Motor neuron (in vitro differentiated cells): ENCODE measurements at regions of chr17 and their contacts with region 1.

Region 1: GRCh38 chr17:38674749-38675615 is at the start of gene EPOP:
- ATAC-seq: peak; percentile 84 to 90 (median 86)
- H3K4me3 ChIP-seq: peak within 1 kb of the TSS; percentile 32 to 48 (median 42)
- H3K27ac ChIP-seq: no peak within 1 kb of the TSS
- H3K4me1 ChIP-seq: peaks cover 3 to 9% of the 10 kb centered on the region in 2 donors
- total RNA-seq, gene EPOP: 0.60 to 8.8 (median 1.4) TPM

Region 2: GRCh38 chr17:38509008-38509771 is 165.8 kb before region 1 on chr17:
- in situ Hi-C with region 1: loop called in 2 of 9 experiments (anchors 25 kb)
- ATAC-seq: peak; percentile 51 to 80 (median 60)
- H3K4me3 ChIP-seq: peak overlapping the region in 3 of 5 donors; percentile 1 to 30 (median 22)
- H3K27ac ChIP-seq: peak overlapping the region; percentile 5 to 58
- H3K4me1 ChIP-seq: peaks cover 8 to 16% of the 10 kb centered on the region in 2 donors

Region 3: DNA sequence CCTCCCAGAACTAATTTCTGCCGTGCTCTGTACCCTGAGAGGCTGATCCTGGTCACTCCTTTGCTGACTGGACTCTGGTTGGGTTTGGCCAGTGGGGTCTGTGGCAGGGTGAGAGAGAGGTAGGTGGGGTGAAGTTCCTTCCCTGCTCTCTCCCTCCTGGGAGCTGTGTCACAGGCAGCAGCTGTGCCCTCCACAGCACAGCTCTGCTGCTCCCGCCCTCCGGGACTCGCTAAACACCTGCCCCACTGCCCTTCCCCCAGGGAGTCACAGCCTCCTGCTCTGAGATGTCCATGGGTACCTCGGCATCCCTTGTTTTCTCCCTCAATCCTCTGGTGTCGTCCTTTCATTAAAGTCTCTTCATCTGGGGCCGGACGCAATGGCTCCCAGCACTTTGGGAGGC is 135.6 kb before region 1 on chr17:
- in situ Hi-C with region 1: loop called in 1 of 9 experiments (anchors 25 kb)
- ATAC-seq: peak in 5 of 8 experiments; percentile 39 to 54 (median 44)
- H3K4me3 ChIP-seq: no peak overlapping the region
- H3K27ac ChIP-seq: no peak overlapping the region
- H3K4me1 ChIP-seq: no peaks in the 10 kb centered on the region

Region 4: DNA sequence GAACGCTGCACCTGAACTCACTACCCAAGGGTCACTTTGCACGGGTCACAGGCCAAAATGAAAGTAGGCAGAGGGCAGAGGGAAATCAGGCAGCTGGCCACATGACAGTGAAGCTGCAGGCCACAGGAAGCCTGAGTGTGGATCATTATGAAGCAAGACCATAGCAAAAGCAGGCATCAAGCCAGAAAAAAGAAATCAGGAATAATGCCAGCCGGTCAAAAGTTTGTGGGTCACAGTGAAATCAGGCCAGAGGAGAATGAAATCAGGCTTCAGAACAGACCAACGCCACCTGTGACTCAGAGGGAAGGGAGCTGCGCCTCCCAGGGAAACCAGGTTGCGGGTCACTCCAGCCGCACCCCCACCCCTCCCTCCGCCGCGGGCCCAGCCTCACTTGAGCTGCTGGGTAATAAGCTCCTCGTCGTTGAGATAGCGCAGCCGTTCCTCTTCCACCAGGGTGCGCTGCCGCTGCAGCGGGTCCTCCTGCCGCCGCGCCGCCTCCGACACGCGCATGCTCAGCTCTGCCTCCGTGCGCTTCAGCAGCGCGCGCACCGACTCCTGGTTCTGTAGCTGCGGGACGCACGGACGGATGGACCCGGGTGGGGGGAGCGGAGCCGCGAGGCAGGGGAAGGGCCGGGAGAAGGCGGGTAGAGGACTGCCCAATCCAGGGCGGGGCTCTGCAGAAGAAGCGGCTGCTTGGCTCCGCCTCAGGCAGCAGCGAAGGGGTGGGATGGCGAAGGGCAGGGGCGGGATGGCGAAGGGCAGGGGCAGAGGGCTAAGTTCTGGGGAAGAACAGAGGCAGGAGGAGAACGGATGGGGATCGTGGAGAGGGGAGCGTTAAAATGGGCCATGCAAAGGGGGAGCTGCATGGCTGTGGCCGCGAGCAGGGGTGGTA is 116.9 kb before region 1 on chr17:
- in situ Hi-C with region 1: loop called in 1 of 9 experiments (anchors 25 kb)
- ATAC-seq: peak; percentile 84 to 97 (median 88)
- H3K4me3 ChIP-seq: peak overlapping the region in 2 of 5 donors; percentile 19 to 20
- H3K27ac ChIP-seq: no peak overlapping the region
- H3K4me1 ChIP-seq: peaks cover 25 to 34% of the 10 kb centered on the region in 2 donors

Region 5: GRCh38 chr17:38605888-38606645 is 68.9 kb before region 1 on chr17 and contains the start of gene SRCIN1:
- in situ Hi-C with region 1: no loop called
- ATAC-seq: peak; percentile 39 to 71 (median 50)
- H3K4me3 ChIP-seq: peak within 1 kb of the TSS; percentile 43 to 62 (median 47)
- H3K27ac ChIP-seq: peak within 1 kb of the TSS; percentile 83 to 87
- H3K4me1 ChIP-seq: peaks cover 38 to 44% of the 10 kb centered on the region in 2 donors
- total RNA-seq, gene SRCIN1: 0.71 to 21.2 (median 14.9) TPM